HCT116 (cell line): ENCODE measurements at regions of chr3 and their contacts with region 1.

Region 1: DNA sequence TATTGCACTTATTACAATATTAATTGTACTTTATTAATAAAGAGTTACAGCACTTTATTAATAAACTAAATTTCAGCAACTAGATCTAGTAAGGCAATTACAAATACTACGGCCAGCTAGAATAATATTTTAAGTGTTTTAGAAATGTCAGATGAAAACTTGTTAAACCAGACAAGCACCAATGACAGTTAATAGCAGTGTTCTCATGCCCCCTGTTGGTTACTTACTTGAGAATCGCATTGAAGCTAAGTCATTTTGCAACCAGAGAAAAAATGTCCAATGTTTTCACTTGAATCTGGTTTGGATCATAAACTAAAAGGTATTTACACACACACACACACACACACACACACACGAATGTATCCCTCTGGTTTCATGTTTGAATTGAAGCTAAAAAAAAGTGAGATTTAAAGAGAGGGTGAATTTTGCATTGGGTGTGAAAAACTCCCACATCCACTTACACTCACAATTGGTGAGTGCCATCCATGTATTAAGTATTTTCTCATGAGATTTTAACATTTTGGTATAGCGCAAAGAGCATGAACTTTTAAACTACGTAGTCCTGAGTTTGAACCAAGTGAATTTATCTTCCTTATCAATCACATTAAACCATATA is 347.7 kb downstream of the ZBBX start:
- DNase-seq: peak; percentile 61
- ATAC-seq: peak; percentile 71
- H3K4me3 ChIP-seq: no peak overlapping the region
- H3K27ac ChIP-seq: no peak overlapping the region
- H3K4me1 ChIP-seq: no peaks in the 10 kb centered on the region
- H3K27me3 ChIP-seq: no peaks in the 10 kb centered on the region
- CTCF ChIP-seq: peak; percentile 41 to 71 (median 46); a peak in 4 of 6 replicates
- POLR2A ChIP-seq: no peak
- RAD21 ChIP-seq: peak; percentile 76

Region 2: DNA sequence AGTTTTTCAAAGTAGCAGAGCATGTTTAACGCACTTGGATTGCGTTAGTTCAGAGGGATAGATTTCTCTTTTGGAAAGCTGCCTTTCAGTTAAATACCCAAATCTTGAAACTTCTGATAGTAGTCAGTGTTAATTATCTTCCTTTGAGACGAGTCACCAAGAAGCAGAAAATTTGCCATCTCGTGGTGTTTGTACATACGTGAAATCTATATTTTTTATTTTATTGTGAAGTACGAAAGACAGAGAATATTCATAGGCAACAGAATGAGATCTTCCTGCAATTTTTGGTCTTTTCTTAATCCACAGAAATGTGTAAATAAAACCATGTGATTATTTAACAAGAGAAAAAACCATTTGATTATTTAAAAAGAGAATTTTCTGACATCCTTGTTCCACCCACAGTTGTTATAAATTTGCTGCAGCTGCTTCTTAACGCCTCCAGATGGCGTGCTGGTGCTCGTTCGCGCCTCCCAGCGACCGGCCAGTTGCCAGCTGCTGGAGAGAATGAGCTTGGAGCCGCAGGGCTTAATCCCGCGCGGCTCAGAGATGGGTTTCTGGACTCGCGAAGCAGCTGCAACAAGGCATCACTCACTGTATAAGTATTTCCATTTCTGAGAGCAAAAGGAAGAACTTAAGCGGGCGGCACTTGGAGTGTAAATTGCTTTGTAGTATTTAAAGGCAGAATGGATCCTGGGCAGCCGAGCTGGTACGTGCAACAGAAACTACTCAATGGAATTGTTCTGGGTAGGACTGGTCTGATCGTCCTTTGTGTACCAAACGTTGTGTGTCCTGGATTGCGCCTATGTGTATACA is 1825.7 kb before region 1 on chr3:
- CTCF ChIA-PET with region 1: interaction called, 5 read pairs
- POLR2A ChIA-PET with region 1: no interaction called
- RAD21 ChIA-PET with region 1: no interaction called
- intact Hi-C with region 1: loop called (anchors 2 kb)
- DNase-seq: peak; percentile 63
- ATAC-seq: peak; percentile 92
- H3K4me3 ChIP-seq: peak overlapping the region; percentile 45 to 62
- H3K27ac ChIP-seq: no peak overlapping the region
- H3K4me1 ChIP-seq: peaks cover 0 to 6% of the 10 kb centered on the region in 2 experiments; a peak in 1 of 4 replicates
- H3K27me3 ChIP-seq: no peaks in the 10 kb centered on the region
- CTCF ChIP-seq: peak; percentile 95 to 99 (median 95)
- POLR2A ChIP-seq: no peak
- RAD21 ChIP-seq: peak; percentile 62

Region 3: DNA sequence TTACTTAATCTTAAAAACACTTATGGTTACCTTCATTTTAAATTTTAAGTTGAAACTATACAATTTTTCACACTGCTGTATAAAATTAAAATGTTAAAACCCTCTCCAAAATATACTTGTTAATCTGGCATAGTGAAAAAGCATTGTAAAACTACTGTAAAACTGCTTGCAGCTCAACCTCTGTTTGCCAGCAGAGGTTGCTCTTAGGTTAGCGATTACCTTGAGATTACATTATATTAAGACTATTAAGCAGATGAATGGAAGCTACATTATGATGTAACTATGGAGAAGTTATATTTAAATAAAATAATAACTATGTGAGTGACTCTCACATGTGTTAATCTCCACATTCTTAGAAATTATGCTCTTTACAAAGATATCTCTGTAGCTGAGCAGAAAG is 1692.6 kb before region 1 on chr3:
- CTCF ChIA-PET with region 1: interaction called, 5 read pairs
- POLR2A ChIA-PET with region 1: no interaction called
- RAD21 ChIA-PET with region 1: no interaction called
- intact Hi-C with region 1: loop called (anchors 10 kb)
- DNase-seq: peak; percentile 21
- ATAC-seq: 0 out of 2 replicates have a peak, but pooled peaks have one; percentile 42
- H3K4me3 ChIP-seq: no peak overlapping the region
- H3K27ac ChIP-seq: no peak overlapping the region
- H3K4me1 ChIP-seq: no peaks in the 10 kb centered on the region
- H3K27me3 ChIP-seq: no peaks in the 10 kb centered on the region
- CTCF ChIP-seq: peak; percentile 33 to 61 (median 38); a peak in 5 of 6 replicates
- POLR2A ChIP-seq: no peak
- RAD21 ChIP-seq: peak; percentile 78

Region 4: GRCh38 chr3:166013073-166013679 is 1019.2 kb before region 1 on chr3:
- CTCF ChIA-PET with region 1: interaction called, 3 read pairs
- POLR2A ChIA-PET with region 1: no interaction called
- RAD21 ChIA-PET with region 1: interaction called in 1 of 2 experiments, 3 read pairs
- intact Hi-C with region 1: loop called (anchors 2 kb)
- DNase-seq: peak; percentile 23
- ATAC-seq: no peak
- H3K4me3 ChIP-seq: no peak overlapping the region
- H3K27ac ChIP-seq: no peak overlapping the region
- H3K4me1 ChIP-seq: no peaks in the 10 kb centered on the region
- H3K27me3 ChIP-seq: no peaks in the 10 kb centered on the region
- CTCF ChIP-seq: peak; percentile 39 to 64 (median 40); a peak in 5 of 6 replicates
- POLR2A ChIP-seq: no peak
- RAD21 ChIP-seq: peak; percentile 66

Region 5: GRCh38 chr3:167350245-167350862 is 318.0 kb after region 1 on chr3:
- CTCF ChIA-PET with region 1: no interaction called
- POLR2A ChIA-PET with region 1: no interaction called
- RAD21 ChIA-PET with region 1: no interaction called
- intact Hi-C with region 1: loop called (anchors 10 kb)
- DNase-seq: peak; percentile 26
- ATAC-seq: no peak; the same call in 1 of the 2 replicates
- H3K4me3 ChIP-seq: no peak overlapping the region
- H3K27ac ChIP-seq: no peak overlapping the region
- H3K4me1 ChIP-seq: no peaks in the 10 kb centered on the region
- H3K27me3 ChIP-seq: no peaks in the 10 kb centered on the region
- CTCF ChIP-seq: peak; percentile 55 to 58 (median 58); a peak in 5 of 6 replicates
- POLR2A ChIP-seq: no peak
- RAD21 ChIP-seq: peak; percentile 79